ENCODE measurements at regions of chr12 and their contacts with region 1.

Region 1: DNA sequence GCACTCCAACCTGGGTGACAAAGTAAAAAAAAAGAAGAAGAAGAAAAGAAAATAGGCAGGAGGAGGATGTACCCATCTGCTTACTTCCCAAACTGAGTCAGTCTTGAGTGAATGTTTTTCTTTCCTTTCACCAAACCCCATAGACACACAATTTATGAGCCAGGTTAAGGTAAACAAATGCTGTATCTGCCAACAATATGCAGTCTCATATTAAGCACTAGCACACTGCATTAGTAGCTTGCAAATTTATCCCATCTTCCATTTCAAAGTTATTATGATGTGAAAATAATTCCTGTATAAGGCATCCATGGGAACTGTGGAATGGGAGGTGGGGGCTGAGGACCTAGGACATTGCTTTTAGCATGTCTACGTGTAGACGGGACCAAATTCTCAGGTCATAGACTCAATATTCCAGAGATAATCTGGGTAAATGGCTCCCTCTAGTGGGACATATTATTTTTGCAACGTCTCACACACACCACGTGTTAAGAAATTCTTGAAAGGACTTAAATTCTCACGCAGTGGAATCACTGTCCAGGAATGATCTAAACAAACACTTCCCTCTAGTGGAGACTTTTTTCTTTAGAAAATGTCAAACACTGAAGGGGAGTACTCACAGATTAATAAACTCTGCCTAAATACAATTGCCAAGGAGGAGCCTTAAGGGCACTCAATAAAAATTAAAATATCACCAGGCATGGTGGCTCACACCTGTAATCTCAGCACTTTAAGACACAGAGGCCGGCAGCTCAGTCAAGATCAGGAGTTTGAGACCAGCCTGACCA is 17.1 kb upstream of the OR10P1 start:
- DNase-seq: peak; percentile 79
- H3K4me3 ChIP-seq: no peak overlapping the region
- H3K27me3 ChIP-seq: no peaks in the 10 kb centered on the region; the same call in none of the 2 replicates
- CTCF ChIP-seq: peak; percentile 76

Region 2: GRCh38 chr12:55188974-55189556 is 430.5 kb before region 1 on chr12:
- CTCF ChIA-PET with region 1: interaction called, 32 read pairs
- POLR2A ChIA-PET with region 1: no interaction called
- DNase-seq: peak; percentile 19
- H3K4me3 ChIP-seq: no peak overlapping the region
- H3K27me3 ChIP-seq: no peaks in the 10 kb centered on the region
- CTCF ChIP-seq: peak; percentile 65

Measured in BJ (cell line).